CD4-positive, alpha-beta T cell (primary cell): ENCODE measurements at regions of chr10 and their contacts with region 1.

Region 1: DNA sequence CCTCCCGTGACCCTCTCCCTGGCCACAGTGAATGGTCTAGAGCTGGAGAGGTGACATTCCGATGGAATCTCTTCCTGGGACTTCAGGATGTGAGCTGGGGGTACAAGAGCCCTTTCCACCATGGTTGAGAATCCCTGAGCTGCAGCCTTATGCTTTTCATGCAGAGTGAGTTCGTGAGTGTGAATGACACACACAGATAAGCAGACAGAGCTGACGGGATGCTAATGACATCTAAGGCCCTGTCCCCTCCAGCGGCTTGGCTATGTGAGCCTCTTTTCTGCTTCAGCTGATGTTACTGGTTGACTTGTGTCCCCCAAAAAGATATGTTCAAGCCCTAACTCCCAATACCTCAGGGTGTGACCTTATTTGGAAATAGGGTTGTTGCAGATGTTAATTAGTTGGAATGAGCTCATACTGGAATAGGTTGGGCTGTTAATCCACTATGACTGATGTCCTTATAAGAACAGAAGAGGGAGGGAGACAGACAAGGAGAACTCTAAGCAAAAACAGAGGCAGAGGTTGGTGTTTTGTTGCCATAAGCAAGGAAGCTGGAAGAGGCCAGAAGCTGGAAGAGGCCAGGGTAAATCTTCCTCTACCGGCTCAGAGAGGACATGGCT is 111.1 kb upstream of the AFAP1L2 start:
- DNase-seq: no peak
- ATAC-seq: peak; percentile 12
- H3K4me3 ChIP-seq: no peak overlapping the region
- H3K4me3 Mint-ChIP-seq: peak overlapping the region; percentile 57
- H3K27ac ChIP-seq: peak overlapping the region in 1 of 2 donors; percentile 16
- H3K27ac Mint-ChIP-seq: peak overlapping the region; percentile 96
- H3K4me1 ChIP-seq: peaks cover 71% of the 10 kb centered on the region
- H3K4me1 Mint-ChIP-seq: peaks cover 98% of the 10 kb centered on the region
- H3K27me3 ChIP-seq: no peaks in the 10 kb centered on the region
- H3K27me3 Mint-ChIP-seq: no peaks in the 10 kb centered on the region
- CTCF ChIP-seq: no peak

Region 2: GRCh38 chr10:114499630-114500190 is 15.7 kb before region 1 on chr10:
- CTCF ChIA-PET with region 1: interaction called, 10 read pairs
- POLR2A ChIA-PET with region 1: interaction called, 53 read pairs
- intact Hi-C with region 1: loop called (anchors 2 kb)
- DNase-seq: peak in 11 of 14 experiments; percentile 24 to 75 (median 57)
- ATAC-seq: peak; percentile 61
- H3K4me3 ChIP-seq: peak overlapping the region; percentile 5
- H3K4me3 Mint-ChIP-seq: peak overlapping the region; percentile 72
- H3K27ac ChIP-seq: peak overlapping the region; percentile 64 to 66
- H3K27ac Mint-ChIP-seq: peak overlapping the region; percentile 66
- H3K4me1 ChIP-seq: peaks cover 68% of the 10 kb centered on the region
- H3K4me1 Mint-ChIP-seq: peaks cover 96% of the 10 kb centered on the region
- H3K27me3 ChIP-seq: no peaks in the 10 kb centered on the region
- H3K27me3 Mint-ChIP-seq: no peaks in the 10 kb centered on the region
- CTCF ChIP-seq: no peak

Region 3: GRCh38 chr10:114504769-114505579 is 10.4 kb before region 1 on chr10:
- CTCF ChIA-PET with region 1: interaction called, 10 read pairs
- POLR2A ChIA-PET with region 1: interaction called, 53 read pairs
- intact Hi-C with region 1: loop called in 1 of 2 experiments (anchors 2 kb)
- DNase-seq: no peak
- ATAC-seq: no peak
- H3K4me3 ChIP-seq: no peak overlapping the region
- H3K4me3 Mint-ChIP-seq: peak overlapping the region; percentile 21
- H3K27ac ChIP-seq: no peak overlapping the region
- H3K27ac Mint-ChIP-seq: peak overlapping the region; percentile 47
- H3K4me1 ChIP-seq: peaks cover 66% of the 10 kb centered on the region
- H3K4me1 Mint-ChIP-seq: peaks cover 96% of the 10 kb centered on the region
- H3K27me3 ChIP-seq: no peaks in the 10 kb centered on the region
- H3K27me3 Mint-ChIP-seq: no peaks in the 10 kb centered on the region
- CTCF ChIP-seq: no peak

Region 4: DNA sequence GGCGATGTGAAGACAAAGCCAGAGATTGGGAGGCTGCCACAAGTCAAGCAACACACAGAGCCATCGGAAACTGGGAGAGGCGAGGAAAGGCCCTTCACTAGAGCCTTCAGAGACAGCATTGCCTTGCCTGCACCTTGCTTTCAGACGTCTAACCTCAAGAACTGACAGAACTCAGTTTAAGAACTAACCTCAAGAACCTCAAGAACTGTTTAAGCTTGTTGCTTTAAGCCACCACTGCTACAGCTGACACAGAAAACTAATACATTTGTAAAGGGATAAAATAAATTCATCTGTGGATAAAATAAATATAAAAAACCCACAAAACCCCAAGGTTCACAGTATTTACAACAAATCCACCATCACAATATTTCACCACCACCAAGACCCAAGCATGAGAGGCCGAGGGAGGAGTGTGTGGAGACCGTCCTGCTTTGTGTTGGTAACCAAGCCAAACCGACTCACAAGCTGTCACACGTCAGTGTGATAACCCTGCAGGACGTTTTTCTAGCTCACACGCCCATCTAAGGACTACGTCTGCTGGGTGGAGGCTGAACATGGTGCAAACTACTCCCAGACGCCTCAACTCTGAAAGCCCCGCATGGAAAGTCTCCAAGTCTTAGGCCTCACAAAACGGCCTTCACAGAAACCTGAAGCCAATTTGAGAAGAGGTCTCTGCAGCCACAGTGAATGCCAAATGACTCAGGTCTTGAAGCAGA is 25.8 kb after region 1 on chr10:
- CTCF ChIA-PET with region 1: interaction called, 4 read pairs
- POLR2A ChIA-PET with region 1: interaction called, 475 read pairs
- intact Hi-C with region 1: loop called in 1 of 2 experiments (anchors 1 kb)
- DNase-seq: peak; percentile 58 to 93 (median 68)
- ATAC-seq: peak; percentile 76
- H3K4me3 ChIP-seq: peak overlapping the region; percentile 8
- H3K4me3 Mint-ChIP-seq: peak overlapping the region; percentile 50
- H3K27ac ChIP-seq: peak overlapping the region; percentile 86 to 92
- H3K27ac Mint-ChIP-seq: peak overlapping the region; percentile 96
- H3K4me1 ChIP-seq: peaks cover 92% of the 10 kb centered on the region
- H3K4me1 Mint-ChIP-seq: peaks cover 96% of the 10 kb centered on the region
- H3K27me3 ChIP-seq: no peaks in the 10 kb centered on the region
- H3K27me3 Mint-ChIP-seq: no peaks in the 10 kb centered on the region
- CTCF ChIP-seq: no peak